Spleen (tissue), 13 donors: ENCODE measurements at regions of chr17 and their contacts with region 1.

Region 1: DNA sequence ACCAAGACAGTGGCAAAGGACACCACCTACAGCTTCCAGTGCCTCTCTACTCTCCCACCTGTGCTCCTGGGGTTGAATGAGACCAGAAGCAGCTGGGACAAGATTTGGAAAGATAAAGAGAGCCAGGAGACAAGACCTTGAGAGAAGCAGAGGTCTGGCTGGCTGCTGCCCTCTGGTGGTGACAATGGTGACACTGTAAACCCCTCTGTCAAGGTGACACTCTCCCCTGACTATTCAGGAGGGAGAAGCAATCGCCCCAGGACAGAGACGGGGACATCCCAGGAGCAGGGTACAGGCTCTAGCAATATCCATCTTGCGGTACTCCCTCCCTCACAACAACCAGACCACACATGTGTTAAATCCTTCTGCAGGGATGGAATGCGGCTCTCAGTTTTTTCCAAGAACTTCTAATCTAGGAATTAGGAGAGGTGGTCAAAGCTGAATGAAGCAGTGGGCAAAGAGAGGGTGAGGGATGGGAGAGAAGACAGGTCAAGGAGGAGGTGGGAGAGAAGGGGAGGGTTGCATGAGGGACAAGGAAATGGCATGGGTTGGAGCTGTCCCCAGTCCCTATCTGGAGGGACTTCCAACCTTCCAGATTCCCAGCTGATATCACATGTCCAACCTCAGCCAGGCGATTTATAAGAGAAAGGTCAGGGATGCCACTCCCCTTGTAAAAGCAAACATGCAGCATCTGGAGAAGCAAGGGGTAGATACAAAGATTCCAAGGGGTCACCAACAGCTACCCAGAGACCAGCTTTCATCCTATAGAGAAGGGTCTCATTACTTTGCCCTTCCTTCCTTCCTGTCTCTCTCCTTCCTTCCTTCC is 2.9 kb downstream of the PHOSPHO1 start:
- DNase-seq: peak; percentile 94
- H3K4me3 ChIP-seq: no peak overlapping the region
- H3K27ac ChIP-seq: peak overlapping the region in 2 of 8 donors; percentile 13 to 43
- H3K4me1 ChIP-seq: peaks cover 34 to 90% (median 64%) of the 10 kb centered on the region in 6 donors
- H3K27me3 ChIP-seq: peaks cover 0 to 50% (median 13%) of the 10 kb centered on the region in 7 donors
- CTCF ChIP-seq: peak; percentile 74 to 94 (median 88)
- POLR2A ChIP-seq: no peak

Region 2: DNA sequence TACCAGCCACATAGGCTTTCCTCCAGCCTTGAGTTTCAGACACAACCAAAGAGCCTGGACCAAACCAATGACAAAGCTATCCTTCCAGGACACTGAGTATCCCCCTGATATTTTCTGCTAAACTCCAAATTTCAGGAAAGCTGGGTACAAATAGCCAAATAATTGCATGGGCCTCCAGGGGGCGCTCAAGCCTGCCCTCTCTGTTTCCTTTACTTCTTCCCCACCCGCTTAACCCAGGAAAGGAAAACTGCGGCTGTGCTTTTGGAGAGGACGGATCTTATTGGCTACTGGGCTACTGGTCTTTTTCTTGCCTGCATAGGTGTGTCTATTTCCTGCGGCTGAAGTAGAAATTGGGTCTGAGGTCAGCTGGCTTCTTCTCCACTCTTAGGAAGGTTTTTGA is 47.3 kb before region 1 on chr17:
- intact Hi-C with region 1: loop called (anchors 2 kb)
- DNase-seq: peak; percentile 87
- H3K4me3 ChIP-seq: no peak overlapping the region
- H3K27ac ChIP-seq: no peak overlapping the region
- H3K4me1 ChIP-seq: peaks cover 0 to 13% (median 3%) of the 10 kb centered on the region in 6 donors
- H3K27me3 ChIP-seq: no peaks in the 10 kb centered on the region
- CTCF ChIP-seq: peak; percentile 56 to 88 (median 82)
- POLR2A ChIP-seq: no peak